A673 (cell line): ENCODE measurements at regions of chr1 and their contacts with region 1.

Region 1: GRCh38 chr1:26602378-26602959 is 72.9 kb downstream of the RPS6KA1 start:
- DNase-seq: peak; percentile 81
- H3K4me3 ChIP-seq: no peak overlapping the region
- H3K27ac ChIP-seq: no peak overlapping the region
- H3K4me1 ChIP-seq: no peaks in the 10 kb centered on the region
- H3K27me3 ChIP-seq: no peaks in the 10 kb centered on the region
- CTCF ChIP-seq: peak; percentile 84

Region 2: GRCh38 chr1:26705788-26706311 is 103.4 kb after region 1 on chr1:
- CTCF ChIA-PET with region 1: interaction called, 14 read pairs
- POLR2A ChIA-PET with region 1: interaction called, 3 read pairs
- intact Hi-C with region 1: no loop called
- DNase-seq: no peak
- H3K4me3 ChIP-seq: no peak overlapping the region
- H3K27ac ChIP-seq: peak overlapping the region; percentile 7
- H3K4me1 ChIP-seq: peaks cover 48% of the 10 kb centered on the region
- H3K27me3 ChIP-seq: no peaks in the 10 kb centered on the region
- CTCF ChIP-seq: no peak

Region 3: DNA sequence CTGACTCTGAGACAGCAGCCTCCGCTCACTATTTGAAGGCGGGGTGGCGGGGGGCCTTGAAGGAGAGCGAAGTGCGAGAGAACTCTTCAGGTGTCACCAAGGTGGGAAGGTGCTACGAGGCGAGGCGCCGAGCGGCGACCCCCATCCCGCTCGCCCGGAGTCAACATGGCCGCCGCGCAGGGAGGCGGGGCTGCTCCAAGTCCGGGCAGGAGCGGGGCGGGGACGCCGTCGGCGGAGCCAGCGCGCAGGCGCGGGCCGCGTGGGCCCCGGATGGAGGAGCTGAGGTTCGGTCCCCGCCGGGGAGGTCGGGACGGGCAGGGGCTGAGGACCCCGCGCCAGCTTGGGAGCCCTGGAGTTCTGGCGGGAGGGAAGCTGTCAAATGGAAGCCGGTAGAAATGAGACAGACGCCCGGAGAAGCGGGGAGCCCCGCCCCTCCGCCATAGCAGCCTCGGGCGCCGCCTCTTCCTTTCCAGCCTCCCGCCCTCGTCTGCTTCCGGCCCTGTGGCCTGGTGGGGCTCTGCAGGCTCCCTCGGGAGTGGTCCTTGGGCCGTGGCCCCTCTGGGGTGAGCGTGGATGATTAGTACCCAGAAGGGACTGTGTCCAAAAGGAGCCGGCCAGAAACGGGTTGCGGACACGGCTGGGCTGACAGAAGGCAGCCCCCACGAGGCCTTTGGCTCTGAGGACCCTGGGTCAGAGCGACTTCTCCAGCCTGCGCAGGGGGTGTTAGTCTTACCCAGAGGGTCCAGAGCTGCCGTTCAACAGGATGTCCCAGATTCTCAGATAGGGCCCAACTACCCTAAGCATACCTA is 185.4 kb after region 1 on chr1 and contains the start of gene PIGV:
- CTCF ChIA-PET with region 1: interaction called, 53 read pairs
- POLR2A ChIA-PET with region 1: no interaction called
- intact Hi-C with region 1: loop called (anchors 1 kb)
- DNase-seq: peak; percentile 94
- H3K4me3 ChIP-seq: peak within 1 kb of the TSS; percentile 63
- H3K27ac ChIP-seq: peak within 1 kb of the TSS; percentile 97
- H3K4me1 ChIP-seq: peaks cover 29% of the 10 kb centered on the region
- H3K27me3 ChIP-seq: no peaks in the 10 kb centered on the region
- CTCF ChIP-seq: no peak
- total RNA-seq, gene PIGV: 4.9 and 9.1 TPM in 2 replicates

Region 4: GRCh38 chr1:26874896-26875295 is 272.4 kb after region 1 on chr1:
- CTCF ChIA-PET with region 1: no interaction called
- POLR2A ChIA-PET with region 1: no interaction called
- intact Hi-C with region 1: loop called (anchors 5 kb)
- DNase-seq: no peak
- H3K4me3 ChIP-seq: no peak overlapping the region
- H3K27ac ChIP-seq: no peak overlapping the region
- H3K4me1 ChIP-seq: no peaks in the 10 kb centered on the region
- H3K27me3 ChIP-seq: no peaks in the 10 kb centered on the region
- CTCF ChIP-seq: no peak